Tibial artery (tissue), 4 donors: ENCODE measurements at regions of chr3 and their contacts with region 1.

Region 1: DNA sequence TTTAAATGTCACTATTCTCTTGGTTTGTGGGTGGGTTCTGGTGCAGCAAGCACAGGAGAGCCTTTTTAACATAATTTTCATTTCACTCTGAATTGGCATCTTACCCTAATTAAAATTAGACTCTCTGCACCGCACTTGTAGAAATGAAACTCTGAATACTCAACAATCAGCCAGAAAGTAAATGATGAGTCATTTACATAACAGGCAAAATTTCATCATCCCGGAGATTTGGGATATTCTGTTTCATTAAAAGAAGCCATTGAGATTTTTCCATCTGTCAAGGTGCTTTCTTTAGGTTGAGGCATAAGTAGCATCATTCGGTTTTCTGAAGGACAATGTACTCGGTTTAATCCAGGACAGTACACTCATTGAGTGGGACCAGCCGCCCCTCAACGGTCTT is 111.0 kb downstream of the RFTN1 start:
- DNase-seq: no peak
- H3K4me3 ChIP-seq: no peak overlapping the region
- H3K27ac ChIP-seq: no peak overlapping the region
- H3K4me1 ChIP-seq: peaks cover 0 to 30% (median 2%) of the 10 kb centered on the region in 4 donors
- H3K27me3 ChIP-seq: no peaks in the 10 kb centered on the region
- CTCF ChIP-seq: no peak

Region 2: GRCh38 chr3:16343101-16343500 is 59.4 kb before region 1 on chr3:
- intact Hi-C with region 1: no loop called
- DNase-seq: no peak
- H3K4me3 ChIP-seq: no peak overlapping the region
- H3K27ac ChIP-seq: no peak overlapping the region
- H3K4me1 ChIP-seq: peaks cover 0 to 12% (median 2%) of the 10 kb centered on the region in 4 donors
- H3K27me3 ChIP-seq: no peaks in the 10 kb centered on the region
- CTCF ChIP-seq: no peak

Region 3: GRCh38 chr3:16511681-16512434 is 109.4 kb after region 1 on chr3:
- intact Hi-C with region 1: loop called (anchors 10 kb)
- DNase-seq: peak; percentile 64 to 84
- H3K4me3 ChIP-seq: peak overlapping the region; percentile 85 to 91
- H3K27ac ChIP-seq: peak overlapping the region; percentile 57 to 79
- H3K4me1 ChIP-seq: peaks cover 0 to 58% (median 21%) of the 10 kb centered on the region in 4 donors
- H3K27me3 ChIP-seq: no peaks in the 10 kb centered on the region
- CTCF ChIP-seq: no peak

Region 4: GRCh38 chr3:17110660-17111396 is 708.4 kb after region 1 on chr3:
- intact Hi-C with region 1: no loop called
- DNase-seq: no peak
- H3K4me3 ChIP-seq: no peak overlapping the region
- H3K27ac ChIP-seq: no peak overlapping the region
- H3K4me1 ChIP-seq: no peaks in the 10 kb centered on the region
- H3K27me3 ChIP-seq: no peaks in the 10 kb centered on the region
- CTCF ChIP-seq: no peak